Aorta (tissue), 5 donors: ENCODE measurements at regions of chr2 and their contacts with region 1.

Region 1: GRCh38 chr2:41634686-41635085 is 413.1 kb upstream of the PKDCC start:
- DNase-seq: no peak
- ATAC-seq: no peak
- H3K4me3 ChIP-seq: no peak overlapping the region
- H3K27ac ChIP-seq: no peak overlapping the region
- H3K4me1 ChIP-seq: peaks cover 0 to 3% of the 10 kb centered on the region in 2 donors
- H3K27me3 ChIP-seq: no peaks in the 10 kb centered on the region

Region 2: GRCh38 chr2:40455661-40456060 is 1179.0 kb before region 1 on chr2:
- intact Hi-C with region 1: no loop called
- DNase-seq: peak in 1 of 2 donors; percentile 59
- ATAC-seq: no peak
- H3K4me3 ChIP-seq: no peak overlapping the region
- H3K27ac ChIP-seq: no peak overlapping the region
- H3K4me1 ChIP-seq: no peaks in the 10 kb centered on the region
- H3K27me3 ChIP-seq: no peaks in the 10 kb centered on the region

Region 3: GRCh38 chr2:41668529-41668928 is 33.8 kb after region 1 on chr2:
- intact Hi-C with region 1: loop called in 1 of 2 experiments (anchors 2 kb)
- DNase-seq: no peak
- ATAC-seq: no peak
- H3K4me3 ChIP-seq: no peak overlapping the region
- H3K27ac ChIP-seq: no peak overlapping the region
- H3K4me1 ChIP-seq: peaks cover 0 to 2% of the 10 kb centered on the region in 2 donors
- H3K27me3 ChIP-seq: no peaks in the 10 kb centered on the region

Region 4: GRCh38 chr2:41853427-41854216 is 218.9 kb after region 1 on chr2:
- intact Hi-C with region 1: no loop called
- DNase-seq: no peak
- ATAC-seq: peak; percentile 43
- H3K4me3 ChIP-seq: no peak overlapping the region
- H3K27ac ChIP-seq: no peak overlapping the region
- H3K4me1 ChIP-seq: no peaks in the 10 kb centered on the region
- H3K27me3 ChIP-seq: no peaks in the 10 kb centered on the region